ENCODE measurements at regions of chr1 and their contacts with region 1.

Region 1: GRCh38 chr1:36703526-36704208 is 221.0 kb upstream of the CSF3R start:
- DNase-seq: peak; percentile 90
- H3K4me3 ChIP-seq: no peak overlapping the region
- H3K27ac ChIP-seq: no peak overlapping the region
- H3K4me1 ChIP-seq: peaks cover 0 to 7% (median 5%) of the 10 kb centered on the region in 6 donors
- H3K27me3 ChIP-seq: peaks cover 0 to 77% (median 9%) of the 10 kb centered on the region in 7 donors
- CTCF ChIP-seq: peak; percentile 67 to 92 (median 84)
- POLR2A ChIP-seq: no peak

Region 2: GRCh38 chr1:37038227-37039076 is 334.8 kb after region 1 on chr1:
- intact Hi-C with region 1: loop called (anchors 10 kb)
- DNase-seq: no peak
- H3K4me3 ChIP-seq: no peak overlapping the region
- H3K27ac ChIP-seq: no peak overlapping the region
- H3K4me1 ChIP-seq: peaks cover 8 to 34% (median 30%) of the 10 kb centered on the region in 6 donors
- H3K27me3 ChIP-seq: peaks cover 0 to 100% (median 77%) of the 10 kb centered on the region in 7 donors
- CTCF ChIP-seq: peak in 4 of 11 experiments; percentile 18 to 44 (median 26)
- POLR2A ChIP-seq: no peak

Region 3: GRCh38 chr1:37323486-37324377 is 620.1 kb after region 1 on chr1:
- intact Hi-C with region 1: loop called (anchors 5 kb)
- DNase-seq: peak; percentile 66
- H3K4me3 ChIP-seq: no peak overlapping the region
- H3K27ac ChIP-seq: no peak overlapping the region
- H3K4me1 ChIP-seq: no peaks in the 10 kb centered on the region
- H3K27me3 ChIP-seq: peaks cover 0 to 70% (median 13%) of the 10 kb centered on the region in 7 donors
- CTCF ChIP-seq: peak; percentile 42 to 79 (median 59)
- POLR2A ChIP-seq: no peak

Region 4: DNA sequence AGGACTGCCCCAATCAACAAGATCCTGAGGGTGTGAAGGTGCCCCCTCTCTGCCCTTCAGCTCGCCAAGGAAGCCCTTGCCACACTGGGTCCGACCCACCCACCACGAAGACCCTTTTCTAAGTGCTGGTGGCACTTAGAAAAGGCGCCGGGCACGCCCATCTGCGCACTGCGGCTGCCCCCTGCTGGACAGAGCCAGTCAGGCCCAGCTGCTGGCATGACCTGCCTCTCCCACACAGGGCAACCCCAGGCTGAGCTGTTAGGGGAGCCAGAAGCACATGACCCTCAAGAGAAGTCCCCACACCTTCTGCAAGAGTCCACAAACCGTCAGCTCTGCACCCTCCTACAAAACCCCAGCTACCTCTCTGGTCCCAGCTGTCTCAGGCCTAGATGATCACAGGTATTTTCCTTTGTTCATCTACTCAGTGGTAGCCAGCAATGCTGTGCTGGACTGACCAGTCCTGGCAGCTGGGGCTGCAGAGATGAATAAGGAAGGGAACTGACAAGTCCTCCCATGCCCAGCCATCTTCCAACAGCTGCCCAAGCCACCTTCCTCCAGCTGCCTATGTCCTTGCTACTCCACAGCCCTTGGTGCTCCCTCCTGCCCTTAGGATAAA is 730.7 kb after region 1 on chr1:
- intact Hi-C with region 1: loop called (anchors 5 kb)
- DNase-seq: peak; percentile 93
- H3K4me3 ChIP-seq: no peak overlapping the region
- H3K27ac ChIP-seq: no peak overlapping the region
- H3K4me1 ChIP-seq: peaks cover 0 to 4% (median 0%) of the 10 kb centered on the region in 6 donors
- H3K27me3 ChIP-seq: peaks cover 0 to 60% (median 5%) of the 10 kb centered on the region in 7 donors
- CTCF ChIP-seq: peak; percentile 70 to 93 (median 88)
- POLR2A ChIP-seq: no peak